ENCODE measurements at regions of chr4 and their contacts with region 1.

Region 1: GRCh38 chr4:82373816-82374625 is at the start of gene HNRNPD:
- DNase-seq: peak; percentile 96
- H3K4me3 Mint-ChIP-seq: peak within 1 kb of the TSS; percentile 95
- H3K27ac Mint-ChIP-seq: peak within 1 kb of the TSS; percentile 95
- H3K4me1 Mint-ChIP-seq: peaks cover 33% of the 10 kb centered on the region
- H3K27me3 Mint-ChIP-seq: no peaks in the 10 kb centered on the region
- total RNA-seq, gene HNRNPD: 340 to 367 TPM

Region 2: GRCh38 chr4:82352913-82353366 is 21.1 kb before region 1 on chr4:
- CTCF ChIA-PET with region 1: no interaction called
- intact Hi-C with region 1: loop called (anchors 1 kb)
- DNase-seq: no peak
- H3K4me3 Mint-ChIP-seq: no peak overlapping the region
- H3K27ac Mint-ChIP-seq: peak overlapping the region; percentile 78
- H3K4me1 Mint-ChIP-seq: peaks cover 55% of the 10 kb centered on the region
- H3K27me3 Mint-ChIP-seq: no peaks in the 10 kb centered on the region

Region 3: DNA sequence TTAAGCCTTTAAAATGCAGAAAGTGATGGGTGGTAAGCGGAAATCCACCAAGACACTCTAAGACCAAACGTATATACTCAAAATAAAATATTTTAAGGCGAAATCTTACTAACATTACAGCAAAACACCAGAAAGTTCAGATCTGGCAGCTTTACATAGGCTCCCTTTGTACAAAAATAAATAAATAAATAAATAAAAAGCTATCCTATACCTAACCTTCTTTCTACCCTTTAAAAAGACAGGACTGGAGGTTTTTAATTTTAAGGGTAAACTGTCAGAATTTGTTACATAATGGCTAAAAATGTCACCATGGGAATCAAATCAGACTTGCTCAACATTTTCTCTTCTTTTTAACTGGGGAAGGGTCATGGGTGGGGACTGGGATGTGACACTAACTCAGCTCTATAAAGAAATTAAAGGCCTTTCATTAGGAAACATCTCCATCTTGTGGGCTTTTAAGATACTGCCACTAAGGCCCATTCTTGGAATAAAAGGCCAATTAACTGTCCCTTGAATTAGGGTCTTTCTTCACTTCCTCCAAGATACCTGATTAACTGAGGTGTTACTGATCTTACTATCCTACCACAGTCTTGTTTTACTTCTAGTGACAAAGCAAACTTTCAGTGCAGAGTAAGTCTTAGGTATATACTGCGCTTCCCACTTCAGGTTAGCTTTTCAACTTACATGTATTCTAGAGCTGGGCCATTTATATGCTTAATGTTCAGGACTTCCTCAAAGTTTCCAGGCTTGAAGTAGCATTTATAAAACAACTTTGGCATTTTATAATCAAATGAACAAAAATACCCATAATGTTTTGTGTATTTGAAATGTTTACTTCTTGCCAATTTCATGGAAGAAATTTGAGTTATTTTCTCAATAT is 13.5 kb before region 1 on chr4:
- CTCF ChIA-PET with region 1: interaction called, 22 read pairs
- intact Hi-C with region 1: loop called (anchors 1 kb)
- DNase-seq: no peak
- H3K4me3 Mint-ChIP-seq: no peak overlapping the region
- H3K27ac Mint-ChIP-seq: peak overlapping the region; percentile 31
- H3K4me1 Mint-ChIP-seq: peaks cover 78% of the 10 kb centered on the region
- H3K27me3 Mint-ChIP-seq: no peaks in the 10 kb centered on the region

Measured in activated naive CD4-positive, alpha-beta T cell treated with anti-CD3 and anti-CD28 coated beads for 36 hours (primary cell).